SK-N-SH (cell line): ENCODE measurements at regions of chr6 and their contacts with region 1.

Region 1: GRCh38 chr6:3732345-3733141 is 19.0 kb downstream of the PXDC1 start:
- DNase-seq: peak; percentile 82
- H3K4me3 ChIP-seq: peak overlapping the region in 1 of 2 experiments; percentile 30; a peak in 1 of 4 replicates
- H3K27ac ChIP-seq: 0 out of 4 replicates have a peak overlapping the region, but pooled peaks of 1 of the 2 experiments have one; percentile 15
- H3K4me1 ChIP-seq: peaks cover 0 to 9% of the 10 kb centered on the region in 2 experiments; a peak in 2 of 4 replicates
- H3K27me3 ChIP-seq: no peaks in the 10 kb centered on the region
- CTCF ChIP-seq: peak; percentile 92
- EP300 ChIP-seq: no peak
- RAD21 ChIP-seq: peak; percentile 90

Region 2: GRCh38 chr6:3281631-3282475 is 450.7 kb before region 1 on chr6:
- CTCF ChIA-PET with region 1: interaction called, 158 read pairs
- POLR2A ChIA-PET with region 1: no interaction called
- DNase-seq: no peak
- H3K4me3 ChIP-seq: no peak overlapping the region
- H3K27ac ChIP-seq: no peak overlapping the region; a peak in 1 of 4 replicates
- H3K4me1 ChIP-seq: peaks cover 13 to 14% of the 10 kb centered on the region in 2 experiments; a peak in 2 of 4 replicates
- H3K27me3 ChIP-seq: no peaks in the 10 kb centered on the region
- CTCF ChIP-seq: no peak
- EP300 ChIP-seq: peak in 1 of 2 experiments; percentile 20; a peak in 1 of 4 replicates
- RAD21 ChIP-seq: no peak

Region 3: GRCh38 chr6:3287936-3288707 is 444.4 kb before region 1 on chr6:
- CTCF ChIA-PET with region 1: interaction called, 158 read pairs
- POLR2A ChIA-PET with region 1: no interaction called
- DNase-seq: no peak
- H3K4me3 ChIP-seq: no peak overlapping the region
- H3K27ac ChIP-seq: no peak overlapping the region
- H3K4me1 ChIP-seq: peaks cover 0 to 7% of the 10 kb centered on the region in 2 experiments; a peak in 1 of 4 replicates
- H3K27me3 ChIP-seq: no peaks in the 10 kb centered on the region; the same call in 1 of the 2 replicates
- CTCF ChIP-seq: no peak
- EP300 ChIP-seq: no peak
- RAD21 ChIP-seq: no peak

Region 4: DNA sequence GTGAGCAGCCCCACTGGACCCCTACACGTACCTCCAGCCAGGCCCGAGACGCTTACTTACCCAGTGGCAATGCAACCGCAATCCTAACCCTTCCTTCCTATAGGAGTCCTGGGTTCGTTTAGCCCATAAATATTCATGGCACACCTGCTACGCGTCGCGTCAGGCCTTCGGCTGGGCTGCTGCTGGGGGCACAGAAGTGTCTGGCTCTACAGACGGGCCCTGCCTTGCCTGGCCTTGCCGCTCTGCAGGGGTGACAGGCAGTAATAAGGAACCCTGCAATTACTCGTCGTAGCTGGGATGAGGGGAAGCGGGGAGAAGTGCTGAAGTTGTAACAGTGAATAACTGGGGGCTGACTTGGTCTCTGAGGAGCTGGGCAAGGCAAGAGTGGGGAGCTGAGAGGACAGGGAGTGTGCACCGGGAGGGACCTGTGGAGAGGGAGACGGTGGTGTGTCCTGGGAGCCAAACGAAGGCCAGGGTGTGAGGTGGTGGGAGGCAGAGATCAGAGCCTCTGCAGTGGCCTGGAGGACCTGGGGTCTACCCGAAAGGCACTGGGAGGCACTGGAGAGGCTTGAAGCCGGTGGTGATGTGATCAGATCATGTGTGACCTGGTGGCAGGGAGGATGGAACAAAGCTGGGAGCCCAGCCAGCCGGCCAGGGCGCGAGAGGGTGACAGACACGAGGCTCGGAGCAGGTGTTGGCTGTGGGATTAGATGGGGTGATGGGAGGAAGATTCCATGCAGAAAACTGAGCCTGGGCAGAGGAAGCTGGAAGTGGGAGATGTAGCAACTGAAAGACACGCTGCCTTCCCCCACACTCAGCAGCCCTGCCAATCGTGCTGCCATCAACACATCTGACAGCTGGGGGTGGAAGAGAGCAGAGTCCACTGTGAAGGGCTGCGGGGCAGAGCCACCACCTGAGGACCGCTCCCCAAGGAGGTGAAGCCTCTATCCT is 437.3 kb before region 1 on chr6:
- CTCF ChIA-PET with region 1: interaction called, 25 read pairs
- POLR2A ChIA-PET with region 1: no interaction called
- DNase-seq: peak; percentile 52
- H3K4me3 ChIP-seq: no peak overlapping the region
- H3K27ac ChIP-seq: no peak overlapping the region
- H3K4me1 ChIP-seq: peaks cover 0 to 11% of the 10 kb centered on the region in 2 experiments; a peak in 1 of 4 replicates
- H3K27me3 ChIP-seq: peaks cover 10% of the 10 kb centered on the region; the same call in 1 of the 2 replicates
- CTCF ChIP-seq: no peak; the same call in 1 of the 2 replicates
- EP300 ChIP-seq: no peak
- RAD21 ChIP-seq: peak; percentile 22; the same call in 1 of the 2 replicates

Region 5: DNA sequence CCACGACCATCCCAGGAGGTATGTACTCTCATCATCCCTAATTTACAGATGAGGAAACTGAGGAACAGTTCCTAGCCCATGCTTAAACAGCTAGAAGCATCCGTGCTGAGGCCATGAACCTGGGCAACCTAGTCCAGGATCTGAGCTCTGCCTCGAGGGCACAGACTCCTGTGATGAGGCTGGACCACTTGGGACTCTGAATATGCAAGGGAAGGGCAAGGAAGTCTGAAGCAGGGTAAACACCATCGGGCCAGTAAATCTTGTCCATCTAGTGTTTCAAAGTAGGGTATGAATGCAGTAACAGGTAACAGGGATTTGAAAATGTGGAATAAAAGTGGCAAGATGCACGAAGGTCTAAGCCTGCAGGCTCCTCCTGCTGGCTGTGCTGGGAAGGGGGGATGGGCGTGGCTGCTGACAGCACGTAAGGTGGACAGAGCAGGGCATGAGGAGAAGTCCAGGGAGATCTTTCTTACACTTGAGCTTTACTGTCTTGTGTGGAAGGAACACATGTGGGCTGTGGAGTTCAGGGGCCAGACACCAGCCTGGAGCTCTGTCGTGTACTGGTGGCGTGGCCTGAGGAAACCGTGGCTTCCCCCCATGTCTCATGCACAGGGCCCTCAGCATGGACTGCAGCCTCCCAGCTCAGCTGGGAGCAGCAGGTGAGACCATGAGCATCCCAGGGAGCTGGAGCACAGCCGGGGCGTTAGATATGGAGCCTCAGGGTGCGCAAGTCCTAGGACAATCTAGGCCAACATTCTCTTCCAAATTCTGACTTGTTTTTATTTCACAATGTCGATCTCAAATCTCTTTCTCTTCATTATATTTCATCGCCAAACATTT is 360.3 kb before region 1 on chr6:
- CTCF ChIA-PET with region 1: no interaction called
- POLR2A ChIA-PET with region 1: no interaction called
- DNase-seq: no peak
- H3K4me3 ChIP-seq: no peak overlapping the region
- H3K27ac ChIP-seq: no peak overlapping the region
- H3K4me1 ChIP-seq: peaks cover 0 to 3% of the 10 kb centered on the region in 2 experiments; a peak in 1 of 4 replicates
- H3K27me3 ChIP-seq: peaks cover 34% of the 10 kb centered on the region
- CTCF ChIP-seq: peak; percentile 9; the same call in 1 of the 2 replicates
- EP300 ChIP-seq: no peak
- RAD21 ChIP-seq: no peak

Region 6: DNA sequence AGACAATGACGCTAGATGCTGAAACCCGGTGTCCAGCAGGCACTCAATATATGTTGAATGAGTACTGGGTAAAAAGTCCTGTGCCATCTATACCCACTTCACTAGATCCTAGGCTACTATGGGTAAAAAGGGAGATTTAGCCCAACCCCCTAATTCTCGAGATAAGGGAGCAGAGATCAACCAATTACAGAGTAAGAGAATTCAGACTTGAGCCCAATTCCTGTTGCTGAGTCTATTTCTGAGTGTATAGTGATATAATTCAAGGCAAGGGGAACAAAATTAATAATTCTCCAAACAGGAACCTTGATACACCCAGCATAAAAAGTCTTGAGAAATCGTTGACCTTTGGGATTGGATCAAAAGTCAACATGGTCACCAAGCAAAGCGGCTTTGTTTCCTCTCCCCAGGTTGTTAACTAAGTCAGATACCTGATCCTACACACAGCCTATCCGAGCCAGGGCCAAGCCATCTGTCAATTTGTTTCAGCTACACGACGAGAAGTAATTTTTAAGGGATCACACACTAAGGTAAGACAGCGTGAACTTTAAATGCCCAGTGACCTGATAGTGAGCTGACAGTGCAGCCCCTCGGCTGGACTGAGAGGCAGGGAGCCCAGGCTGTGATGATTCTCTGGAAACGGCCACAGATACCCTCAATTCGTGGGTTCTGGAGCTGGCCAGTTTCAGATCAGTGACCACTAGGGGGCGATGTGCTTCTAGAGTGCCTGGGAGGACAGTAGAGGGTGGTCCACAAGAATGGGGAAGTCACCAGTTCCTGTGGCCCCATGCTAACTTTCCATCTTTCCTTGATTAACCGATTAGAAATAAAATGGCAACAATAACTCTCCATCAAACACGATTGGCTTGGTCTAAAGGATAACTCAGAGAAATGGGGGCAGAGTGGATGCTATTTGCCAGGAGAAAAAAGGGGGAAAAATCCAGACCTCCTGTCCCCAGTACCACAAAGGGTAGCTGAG is 321.9 kb before region 1 on chr6:
- CTCF ChIA-PET with region 1: interaction called, 29 read pairs
- POLR2A ChIA-PET with region 1: no interaction called
- DNase-seq: peak; percentile 62
- H3K4me3 ChIP-seq: no peak overlapping the region; a peak in 1 of 4 replicates
- H3K27ac ChIP-seq: no peak overlapping the region
- H3K4me1 ChIP-seq: no peaks in the 10 kb centered on the region
- H3K27me3 ChIP-seq: peaks cover 49% of the 10 kb centered on the region; the same call in 1 of the 2 replicates
- CTCF ChIP-seq: peak; percentile 75
- EP300 ChIP-seq: no peak
- RAD21 ChIP-seq: peak; percentile 57

Region 7: GRCh38 chr6:3742426-3743344 is 10.1 kb after region 1 on chr6:
- CTCF ChIA-PET with region 1: interaction called, 88 read pairs
- POLR2A ChIA-PET with region 1: no interaction called
- DNase-seq: peak; percentile 84
- H3K4me3 ChIP-seq: peak overlapping the region; percentile 12 to 48; a peak in 2 of 4 replicates
- H3K27ac ChIP-seq: peak overlapping the region in 1 of 2 experiments; percentile 31; a peak in 2 of 4 replicates
- H3K4me1 ChIP-seq: peaks cover 5 to 20% of the 10 kb centered on the region in 2 experiments; a peak in 2 of 4 replicates
- H3K27me3 ChIP-seq: no peaks in the 10 kb centered on the region
- CTCF ChIP-seq: peak; percentile 95
- EP300 ChIP-seq: no peak
- RAD21 ChIP-seq: peak; percentile 93

Region 8: DNA sequence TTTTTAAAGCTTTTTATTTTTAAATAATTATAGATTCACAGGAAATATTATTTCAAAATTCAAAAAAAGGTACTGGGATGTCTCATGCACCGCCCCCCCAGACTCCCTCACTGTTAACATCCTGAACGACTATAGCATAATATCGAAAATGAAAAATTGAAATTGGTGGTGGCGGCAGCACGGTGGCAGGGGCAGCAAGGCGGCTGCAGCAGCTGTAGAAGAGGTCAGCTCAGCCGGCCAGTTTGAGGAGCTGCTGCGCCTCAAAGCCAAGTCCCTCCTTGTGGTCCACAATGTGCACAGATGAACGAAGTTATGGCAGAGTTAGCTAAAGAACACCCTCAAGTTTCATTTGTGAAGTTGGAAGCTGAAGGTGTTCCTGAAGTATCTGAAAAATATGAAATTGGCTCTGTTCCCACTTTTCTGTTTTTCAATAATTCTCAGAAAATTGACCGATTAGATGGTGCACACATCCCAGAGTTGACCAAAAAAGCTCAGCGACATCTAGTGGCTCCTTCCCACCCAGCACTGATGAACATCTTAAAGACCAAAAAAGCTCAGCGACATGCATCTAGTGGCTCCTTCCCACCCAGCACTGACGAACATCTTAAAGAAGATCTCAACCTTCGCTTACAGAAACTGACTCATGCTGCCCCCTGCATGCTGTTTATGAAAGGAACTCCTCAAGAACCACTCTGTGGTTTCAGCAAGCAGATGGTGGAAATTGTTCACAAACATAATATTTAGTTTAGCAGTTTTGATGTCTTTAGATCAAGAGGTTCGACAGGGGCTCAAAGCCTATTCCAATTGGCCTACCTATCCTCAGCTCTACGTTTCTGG is 245.6 kb after region 1 on chr6:
- CTCF ChIA-PET with region 1: interaction called, 10 read pairs
- POLR2A ChIA-PET with region 1: no interaction called
- DNase-seq: no peak
- H3K4me3 ChIP-seq: no peak overlapping the region
- H3K27ac ChIP-seq: no peak overlapping the region
- H3K4me1 ChIP-seq: no peaks in the 10 kb centered on the region
- H3K27me3 ChIP-seq: no peaks in the 10 kb centered on the region
- CTCF ChIP-seq: peak; percentile 48
- EP300 ChIP-seq: no peak
- RAD21 ChIP-seq: peak; percentile 30; the same call in 1 of the 2 replicates